GM10248 (cell line): ENCODE measurements at regions of chr6 and their contacts with region 1.

Region 1: DNA sequence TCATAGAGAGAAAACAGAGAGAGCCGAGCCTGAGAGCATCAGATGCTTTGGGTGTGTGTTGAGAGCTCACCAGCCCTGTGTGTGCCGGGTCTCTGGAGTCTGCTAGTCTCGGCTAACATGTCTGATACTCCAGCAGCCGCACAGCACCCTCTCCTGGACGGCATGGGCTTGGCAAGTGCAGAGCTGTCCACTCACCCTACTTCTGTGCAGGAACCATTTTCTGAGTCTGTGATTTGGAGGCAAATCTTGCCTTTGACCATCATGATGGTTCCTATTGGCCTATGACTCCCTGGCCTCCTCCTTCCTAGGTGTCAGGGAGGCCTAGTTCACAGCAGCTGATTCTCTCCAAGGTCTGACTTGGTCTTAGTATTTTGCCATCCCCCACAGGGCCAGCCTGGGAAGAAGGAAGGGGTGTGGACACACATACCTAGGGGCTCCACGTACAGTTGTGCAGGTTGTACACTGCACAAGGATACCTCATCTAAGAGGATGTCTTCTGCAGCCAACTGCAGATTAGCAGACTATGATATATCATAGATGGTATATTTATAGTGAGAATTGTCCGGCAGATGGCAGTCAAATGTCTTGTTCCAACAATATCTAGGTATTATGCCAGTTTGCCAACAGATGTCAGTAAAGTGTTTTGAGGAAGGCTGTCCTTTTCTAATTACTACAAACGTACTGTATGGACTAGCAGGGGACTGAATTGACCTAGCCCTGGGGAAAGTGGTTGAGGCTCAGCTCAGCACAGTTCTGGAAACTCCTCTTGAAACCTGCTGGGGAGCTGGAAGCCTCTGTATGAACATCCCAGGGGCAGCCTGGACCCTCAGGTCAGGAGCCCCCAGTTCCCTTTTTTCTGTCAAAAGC is 13.0 kb downstream of the FGD2 start:
- DNase-seq: peak; percentile 89
- CTCF ChIP-seq: peak; percentile 93

Region 2: GRCh38 chr6:36851149-36851614 is 167.2 kb before region 1 on chr6:
- CTCF ChIA-PET with region 1: interaction called, 10 read pairs
- POLR2A ChIA-PET with region 1: no interaction called
- DNase-seq: peak; percentile 70
- CTCF ChIP-seq: peak; percentile 76

Region 3: GRCh38 chr6:36979347-36979742 is 39.1 kb before region 1 on chr6:
- CTCF ChIA-PET with region 1: interaction called, 42 read pairs
- POLR2A ChIA-PET with region 1: no interaction called
- DNase-seq: no peak
- CTCF ChIP-seq: peak; percentile 48

Region 4: DNA sequence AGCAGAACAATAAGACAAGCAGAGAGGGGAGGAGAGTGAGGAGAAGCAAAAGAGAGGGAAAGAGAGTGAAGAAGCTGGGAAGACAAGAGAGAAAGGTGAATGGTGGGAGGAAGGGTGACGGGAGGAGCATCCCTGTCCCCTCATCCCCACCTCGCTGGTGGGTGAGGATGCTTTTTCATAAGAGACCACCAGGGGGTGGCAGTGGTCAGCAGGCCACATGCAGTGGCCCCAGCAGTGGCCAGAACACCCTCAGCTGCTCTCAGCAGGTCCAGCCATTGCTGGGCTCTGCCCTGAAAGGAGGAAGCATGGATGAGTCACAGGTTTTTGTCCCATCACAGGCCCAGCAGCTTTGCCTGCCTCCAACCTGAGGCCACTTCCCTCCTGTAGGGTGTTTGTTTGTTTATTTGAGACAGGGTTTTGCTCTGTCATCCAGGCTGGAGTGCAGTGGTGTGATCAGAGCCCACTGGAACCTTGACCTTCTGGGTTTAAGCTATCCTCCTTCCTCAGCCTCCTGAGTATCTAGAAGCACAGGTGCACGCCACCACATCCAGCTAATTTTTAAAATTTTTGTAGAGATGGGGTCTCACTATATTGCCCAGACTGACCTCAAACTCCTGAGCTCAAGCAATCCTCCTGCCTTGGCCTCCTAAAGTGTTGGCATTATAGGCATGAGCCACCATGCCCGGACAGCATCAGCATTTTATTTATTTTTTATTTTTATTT is 11.0 kb after region 1 on chr6:
- CTCF ChIA-PET with region 1: interaction called, 183 read pairs
- POLR2A ChIA-PET with region 1: no interaction called
- DNase-seq: peak; percentile 73
- CTCF ChIP-seq: peak; percentile 79

Region 5: GRCh38 chr6:37190159-37190535 is 171.7 kb after region 1 on chr6:
- CTCF ChIA-PET with region 1: interaction called, 774 read pairs
- POLR2A ChIA-PET with region 1: no interaction called
- DNase-seq: no peak
- CTCF ChIP-seq: no peak